Heart left ventricle (tissue), 16 donors: ENCODE measurements at regions of chr19 and their contacts with region 1.

Region 1: GRCh38 chr19:45523642-45524256 is 16.5 kb downstream of the VASP start:
- DNase-seq: peak; percentile 77 to 85 (median 78)
- ATAC-seq: peak; percentile 90 to 94 (median 94)
- H3K4me3 ChIP-seq: no peak overlapping the region
- H3K27ac ChIP-seq: peak overlapping the region in 8 of 12 donors; percentile 23 to 74 (median 58)
- H3K4me1 ChIP-seq: peaks cover under 1 to 50% (median 11%) of the 10 kb centered on the region in 12 donors
- H3K27me3 ChIP-seq: no peaks in the 10 kb centered on the region
- CTCF ChIP-seq: peak; percentile 82 to 97 (median 90)
- POLR2A ChIP-seq: no peak

Region 2: DNA sequence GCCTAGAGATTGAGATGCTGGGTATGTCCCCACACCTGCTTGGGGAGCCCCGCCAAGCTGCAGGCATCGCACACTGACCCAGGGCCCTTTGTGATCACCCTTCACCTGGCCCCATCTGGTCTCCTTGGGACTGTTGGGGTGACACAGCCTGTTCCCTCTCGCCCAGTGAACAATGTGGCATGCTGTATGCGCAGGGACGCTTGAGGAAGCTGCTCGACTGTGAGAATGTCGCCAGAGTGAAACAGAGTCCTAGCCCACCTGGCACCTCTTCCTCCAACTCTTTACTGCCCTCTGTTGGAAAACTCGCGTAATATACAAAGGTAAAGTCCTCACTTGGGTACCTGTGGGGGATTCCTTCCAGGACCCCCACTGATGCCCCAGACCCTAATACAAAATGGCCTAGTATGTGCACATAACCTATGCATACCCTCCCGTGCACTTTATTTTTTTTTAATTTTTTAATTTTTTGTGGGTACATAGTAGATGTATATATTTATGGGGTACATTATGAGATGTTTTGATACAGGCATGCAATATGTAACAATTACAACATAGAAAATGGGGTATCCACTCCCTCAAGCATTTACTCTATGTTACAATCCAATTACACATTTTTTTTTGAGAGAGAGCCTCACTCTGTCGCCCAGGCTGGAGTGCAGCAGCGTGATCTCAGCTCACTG is 336.2 kb before region 1 on chr19:
- intact Hi-C with region 1: no loop called
- DNase-seq: peak in 1 of 5 donors; percentile 35
- ATAC-seq: peak in 2 of 4 donors; percentile 42 to 45
- H3K4me3 ChIP-seq: no peak overlapping the region
- H3K27ac ChIP-seq: no peak overlapping the region
- H3K4me1 ChIP-seq: peaks cover 0 to 16% (median 0%) of the 10 kb centered on the region in 12 donors
- H3K27me3 ChIP-seq: no peaks in the 10 kb centered on the region
- CTCF ChIP-seq: peak; percentile 34 to 63 (median 54)
- POLR2A ChIP-seq: no peak

Region 3: DNA sequence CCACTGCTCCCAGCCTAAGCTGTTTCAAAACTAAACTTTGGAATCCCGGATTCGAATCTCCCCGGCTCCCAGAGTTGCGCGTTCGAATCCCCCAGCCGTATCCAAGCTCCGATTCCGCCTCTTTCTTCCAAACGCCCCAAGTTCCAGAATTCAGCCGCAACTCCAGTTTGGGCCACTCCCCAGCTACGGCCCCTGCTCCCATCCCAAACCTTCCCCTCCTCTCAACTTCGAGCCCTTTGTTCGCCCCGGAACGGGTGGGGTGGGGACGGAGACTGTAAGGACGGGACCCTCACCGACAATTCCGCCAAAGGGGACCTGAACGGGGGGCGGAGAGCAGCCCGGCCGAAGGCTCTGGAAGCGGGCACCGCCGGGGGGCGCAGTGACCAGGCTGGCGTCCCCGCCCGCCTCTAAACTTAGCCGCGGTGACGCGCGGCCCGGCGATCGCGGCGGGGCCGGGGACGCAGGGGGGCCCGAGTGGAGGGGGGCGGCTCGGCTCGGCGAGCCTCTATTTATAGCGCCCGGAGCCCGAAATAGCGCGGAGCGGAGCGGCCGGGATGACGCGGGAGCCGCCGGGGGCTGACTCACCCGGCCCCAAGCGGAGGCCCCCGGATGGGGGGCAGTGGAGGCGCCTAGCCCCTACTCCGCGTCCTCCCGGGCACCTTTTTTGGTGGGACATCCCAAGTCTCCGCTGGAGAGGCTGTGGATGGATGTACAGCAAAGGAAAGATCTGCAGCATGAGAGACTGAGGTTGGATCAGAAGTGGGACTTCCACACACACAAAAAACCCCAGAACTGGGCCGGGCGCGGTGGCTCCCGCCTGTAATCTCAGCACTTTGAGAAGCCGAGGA is 95.1 kb before region 1 on chr19:
- intact Hi-C with region 1: no loop called
- DNase-seq: peak; percentile 80 to 89 (median 85)
- ATAC-seq: peak; percentile 35 to 87 (median 72)
- H3K4me3 ChIP-seq: peak overlapping the region in 11 of 12 donors; percentile 29 to 65 (median 53)
- H3K27ac ChIP-seq: peak overlapping the region; percentile 62 to 93 (median 87)
- H3K4me1 ChIP-seq: peaks cover 0 to 58% (median 30%) of the 10 kb centered on the region in 12 donors
- H3K27me3 ChIP-seq: peaks cover 0 to 6% (median 0%) of the 10 kb centered on the region in 9 donors
- CTCF ChIP-seq: peak in 11 of 12 donors; percentile 3 to 69 (median 56)
- POLR2A ChIP-seq: peak in 1 of 2 donors; percentile 66

Region 4: GRCh38 chr19:45496349-45496953 is 27.3 kb before region 1 on chr19:
- intact Hi-C with region 1: no loop called
- DNase-seq: peak in 4 of 5 donors; percentile 59 to 81 (median 64)
- ATAC-seq: peak in 2 of 4 donors; percentile 28 to 44
- H3K4me3 ChIP-seq: peak overlapping the region; percentile 57 to 98 (median 78)
- H3K27ac ChIP-seq: peak overlapping the region in 8 of 12 donors; percentile 10 to 67 (median 50)
- H3K4me1 ChIP-seq: peaks cover 7 to 67% (median 34%) of the 10 kb centered on the region in 12 donors
- H3K27me3 ChIP-seq: peaks cover 0 to 25% (median 9%) of the 10 kb centered on the region in 9 donors
- CTCF ChIP-seq: no peak
- POLR2A ChIP-seq: no peak

Region 5: DNA sequence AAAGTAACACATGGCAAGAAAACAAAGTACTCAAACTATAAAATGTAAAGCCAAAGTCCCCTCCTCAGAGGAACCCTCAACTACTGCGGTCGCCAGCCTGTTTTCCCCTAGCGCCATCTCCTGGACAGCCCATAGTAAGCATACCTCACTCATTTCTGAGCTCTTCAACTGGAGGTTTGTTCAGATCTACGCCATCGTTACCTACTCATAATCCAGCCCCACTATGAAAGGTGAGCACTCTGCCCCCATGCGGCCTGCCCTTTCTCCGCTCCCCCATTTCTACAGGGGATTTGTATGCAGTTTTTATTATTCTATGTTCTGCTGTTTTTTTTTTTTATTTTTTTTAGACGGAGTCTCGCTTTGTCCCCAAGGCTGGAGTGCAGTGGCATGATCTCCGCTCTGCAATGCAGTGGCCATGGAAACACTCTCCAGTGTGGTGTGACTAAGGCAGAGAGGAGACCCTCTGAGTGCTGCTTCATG is 34.7 kb after region 1 on chr19:
- intact Hi-C with region 1: loop called in 4 of 10 experiments (anchors 5 kb)
- DNase-seq: peak in 2 of 5 donors; percentile 40 to 51
- ATAC-seq: peak; percentile 44 to 55 (median 48)
- H3K4me3 ChIP-seq: no peak overlapping the region
- H3K27ac ChIP-seq: no peak overlapping the region
- H3K4me1 ChIP-seq: peaks cover 0 to 34% (median 11%) of the 10 kb centered on the region in 12 donors
- H3K27me3 ChIP-seq: no peaks in the 10 kb centered on the region
- CTCF ChIP-seq: peak; percentile 25 to 66 (median 52)
- POLR2A ChIP-seq: no peak

Region 6: DNA sequence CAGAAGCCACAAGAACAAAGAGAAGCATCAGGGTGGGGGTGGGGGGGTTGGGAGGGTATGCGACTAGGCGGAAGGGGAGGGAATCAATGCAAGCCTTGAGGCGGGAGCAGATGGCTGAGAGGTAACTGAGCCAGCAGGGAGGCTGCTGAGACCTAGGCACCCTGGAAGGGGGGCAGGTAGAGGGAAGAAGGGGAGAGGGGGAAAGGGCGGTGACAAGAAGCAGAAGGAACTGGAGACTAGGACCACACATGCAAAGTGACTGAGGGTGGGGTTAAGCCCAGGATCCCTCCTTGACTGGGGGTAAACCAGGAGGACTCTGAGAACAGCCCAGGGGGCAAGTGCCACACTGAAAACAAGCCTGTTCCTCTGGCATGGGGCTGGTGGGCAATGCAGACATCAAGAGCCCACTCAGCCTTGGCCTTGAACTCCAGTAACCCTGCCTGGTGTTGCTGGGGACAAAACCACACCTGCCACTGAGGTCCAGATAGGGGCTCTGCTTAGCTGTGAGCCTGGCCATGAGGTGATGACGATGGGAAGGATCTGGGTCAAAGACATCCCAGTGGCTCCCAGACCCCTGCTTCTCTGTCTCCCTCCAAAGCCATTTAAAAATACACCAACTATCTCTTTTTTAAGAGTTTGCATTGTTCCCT is 40.5 kb after region 1 on chr19:
- intact Hi-C with region 1: loop called in 6 of 10 experiments (anchors 2 to 5 kb)
- DNase-seq: peak in 2 of 5 donors; percentile 10 to 18
- ATAC-seq: no peak
- H3K4me3 ChIP-seq: no peak overlapping the region
- H3K27ac ChIP-seq: peak overlapping the region in 2 of 12 donors; percentile 1 to 6
- H3K4me1 ChIP-seq: peaks cover 4 to 33% (median 18%) of the 10 kb centered on the region in 12 donors
- H3K27me3 ChIP-seq: no peaks in the 10 kb centered on the region
- CTCF ChIP-seq: no peak
- POLR2A ChIP-seq: no peak

Region 7: DNA sequence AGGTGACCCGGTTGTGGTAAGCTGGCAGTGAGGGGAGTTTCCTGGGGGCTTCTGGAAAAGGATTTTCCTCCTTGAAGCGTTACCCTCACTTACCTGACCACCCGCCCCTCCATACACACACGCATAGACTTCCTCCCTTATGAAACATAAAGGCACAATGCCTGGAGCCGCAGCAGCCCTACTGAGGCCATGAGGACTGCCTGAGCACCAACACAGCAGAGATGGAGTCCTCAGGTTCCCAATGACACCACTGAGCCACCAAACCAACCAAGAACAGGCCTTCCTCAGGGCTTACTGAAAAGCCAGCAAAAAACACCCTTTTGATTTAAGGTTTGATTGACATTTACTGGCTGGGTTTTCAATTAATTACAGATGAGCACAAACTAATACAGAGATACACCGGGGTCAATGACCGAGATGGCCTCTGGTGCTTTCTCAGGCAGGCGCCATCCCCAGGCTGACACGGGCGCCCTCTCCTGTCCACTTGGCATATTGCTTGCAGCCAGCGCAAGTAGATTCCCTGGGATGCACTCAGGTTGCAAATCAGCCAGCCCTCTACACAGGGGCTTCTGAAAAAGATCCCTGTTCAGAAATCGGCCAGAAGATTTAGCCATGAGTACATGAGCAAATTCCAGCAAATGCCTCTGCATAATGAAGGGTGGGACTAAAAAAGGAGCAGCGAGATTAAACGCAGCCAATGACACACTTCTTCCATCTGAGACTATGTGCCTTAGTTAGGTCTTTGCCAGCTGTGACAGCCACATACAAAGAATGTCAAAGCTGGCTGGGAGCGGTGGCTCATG is 46.1 kb after region 1 on chr19:
- intact Hi-C with region 1: loop called in 8 of 10 experiments (anchors 1 to 10 kb)
- DNase-seq: peak; percentile 51 to 83 (median 71)
- ATAC-seq: peak; percentile 64 to 76 (median 70)
- H3K4me3 ChIP-seq: no peak overlapping the region
- H3K27ac ChIP-seq: peak overlapping the region in 11 of 12 donors; percentile 19 to 83 (median 64)
- H3K4me1 ChIP-seq: peaks cover 0 to 50% (median 20%) of the 10 kb centered on the region in 12 donors
- H3K27me3 ChIP-seq: no peaks in the 10 kb centered on the region
- CTCF ChIP-seq: peak; percentile 59 to 84 (median 73)
- POLR2A ChIP-seq: no peak

Region 8: DNA sequence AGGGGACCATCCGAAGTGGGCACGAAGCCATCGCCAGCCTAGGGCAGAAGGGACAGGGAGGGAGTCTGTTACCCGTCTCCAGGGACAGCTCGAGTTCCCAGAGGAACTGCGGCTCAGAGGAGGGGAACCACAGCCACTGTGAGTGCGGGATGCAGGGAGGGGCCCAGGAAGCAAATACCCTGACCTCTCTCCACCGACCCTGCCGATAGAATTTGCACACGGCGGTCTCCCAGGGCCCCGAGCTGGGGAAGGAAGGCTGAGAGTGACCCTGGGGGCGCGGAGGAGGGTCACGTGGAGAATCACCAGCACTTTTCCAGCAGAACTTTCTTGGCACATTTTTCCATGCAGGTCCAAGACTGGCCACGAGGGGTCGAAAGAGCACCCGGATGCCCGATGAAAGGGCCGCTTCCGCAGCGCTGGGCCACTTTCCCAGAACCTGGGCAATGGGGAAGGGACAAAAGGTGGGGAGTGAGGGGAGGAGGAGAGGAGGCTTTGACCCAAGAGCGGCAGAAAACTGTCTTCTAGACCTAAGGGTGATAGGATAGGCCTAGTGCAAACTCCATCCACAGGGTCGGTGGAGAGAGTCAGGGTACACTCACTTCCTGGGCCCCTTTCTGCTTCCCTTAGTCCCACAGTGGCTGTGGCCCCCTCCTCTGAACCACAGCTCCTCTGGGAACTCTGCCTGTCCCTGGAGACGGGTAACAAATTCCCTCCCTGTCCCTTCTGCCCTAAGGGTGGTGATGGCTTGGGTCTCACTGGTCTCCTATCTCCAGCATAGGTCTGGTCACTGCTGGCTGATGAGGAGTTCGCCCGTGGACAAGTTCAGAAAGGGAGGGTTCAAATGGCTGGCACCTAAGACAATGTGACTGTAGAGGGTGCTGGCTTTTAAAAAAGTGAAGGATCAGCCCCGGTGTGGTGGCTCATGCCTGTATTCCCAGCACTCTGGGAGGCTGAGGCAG is 83.6 kb after region 1 on chr19:
- intact Hi-C with region 1: loop called in 1 of 10 experiments (anchors 1 kb)
- DNase-seq: peak; percentile 77 to 85 (median 80)
- ATAC-seq: peak; percentile 78 to 90 (median 86)
- H3K4me3 ChIP-seq: peak overlapping the region in 9 of 12 donors; percentile 29 to 50 (median 41)
- H3K27ac ChIP-seq: peak overlapping the region in 11 of 12 donors; percentile 34 to 76 (median 64)
- H3K4me1 ChIP-seq: peaks cover 0 to 14% (median 9%) of the 10 kb centered on the region in 12 donors
- H3K27me3 ChIP-seq: peaks cover 0 to 12% (median 5%) of the 10 kb centered on the region in 9 donors
- CTCF ChIP-seq: peak; percentile 77 to 95 (median 88)
- POLR2A ChIP-seq: no peak

Region 9: GRCh38 chr19:45681391-45682015 is 157.8 kb after region 1 on chr19:
- intact Hi-C with region 1: loop called in 1 of 10 experiments (anchors 5 kb)
- DNase-seq: peak; percentile 78 to 91 (median 86)
- ATAC-seq: peak; percentile 86 to 91 (median 88)
- H3K4me3 ChIP-seq: peak overlapping the region; percentile 3 to 55 (median 47)
- H3K27ac ChIP-seq: peak overlapping the region in 11 of 12 donors; percentile 29 to 82 (median 61)
- H3K4me1 ChIP-seq: peaks cover 0 to 33% (median 15%) of the 10 kb centered on the region in 12 donors
- H3K27me3 ChIP-seq: peaks cover 10 to 33% (median 27%) of the 10 kb centered on the region in 9 donors
- CTCF ChIP-seq: peak; percentile 91 to 99 (median 98)
- POLR2A ChIP-seq: peak in 1 of 2 donors; percentile 42